Activated B cell treated with CpG ODN at 0.5 μM for 24 hours (primary cell): ENCODE measurements at regions of chr4 and their contacts with region 1.

Region 1: GRCh38 chr4:39181905-39182638 is at the start of gene WDR19:
- DNase-seq: peak; percentile 93
- ATAC-seq: peak; percentile 97
- H3K4me3 Mint-ChIP-seq: no peak within 1 kb of the TSS
- H3K27ac Mint-ChIP-seq: peak within 1 kb of the TSS; percentile 46
- H3K4me1 Mint-ChIP-seq: peaks cover 7% of the 10 kb centered on the region
- H3K27me3 Mint-ChIP-seq: no peaks in the 10 kb centered on the region
- CTCF ChIP-seq: no peak
- total RNA-seq, gene WDR19: 23.8 and 28.4 TPM in 2 replicates

Region 2: GRCh38 chr4:37826295-37827029 is 1355.6 kb before region 1 on chr4 and contains the start of gene PGM2:
- CTCF ChIA-PET with region 1: no interaction called
- POLR2A ChIA-PET with region 1: no interaction called
- intact Hi-C with region 1: loop called (anchors 5 kb)
- DNase-seq: peak; percentile 91
- ATAC-seq: peak; percentile 96
- H3K4me3 Mint-ChIP-seq: peak within 1 kb of the TSS; percentile 100
- H3K27ac Mint-ChIP-seq: peak within 1 kb of the TSS; percentile 98
- H3K4me1 Mint-ChIP-seq: peaks cover 27% of the 10 kb centered on the region
- H3K27me3 Mint-ChIP-seq: no peaks in the 10 kb centered on the region
- CTCF ChIP-seq: no peak
- total RNA-seq, gene PGM2: 26.4 and 29.6 TPM in 2 replicates

Region 3: GRCh38 chr4:39032218-39033085 is 149.6 kb before region 1 on chr4 and contains the start of gene TMEM156:
- CTCF ChIA-PET with region 1: no interaction called
- POLR2A ChIA-PET with region 1: interaction called, 4 read pairs
- intact Hi-C with region 1: loop called (anchors 1 kb)
- DNase-seq: no peak
- ATAC-seq: peak; percentile 69
- H3K4me3 Mint-ChIP-seq: peak within 1 kb of the TSS; percentile 83
- H3K27ac Mint-ChIP-seq: peak within 1 kb of the TSS; percentile 93
- H3K4me1 Mint-ChIP-seq: peaks cover 64% of the 10 kb centered on the region
- H3K27me3 Mint-ChIP-seq: no peaks in the 10 kb centered on the region
- CTCF ChIP-seq: no peak
- total RNA-seq, gene TMEM156: 26.0 and 29.5 TPM in 2 replicates

Region 4: GRCh38 chr4:39169426-39170185 is 12.5 kb before region 1 on chr4:
- CTCF ChIA-PET with region 1: interaction called, 8 read pairs
- POLR2A ChIA-PET with region 1: interaction called, 20 read pairs
- intact Hi-C with region 1: loop called (anchors 1 kb)
- DNase-seq: no peak
- ATAC-seq: no peak
- H3K4me3 Mint-ChIP-seq: no peak overlapping the region
- H3K27ac Mint-ChIP-seq: no peak overlapping the region
- H3K4me1 Mint-ChIP-seq: peaks cover 51% of the 10 kb centered on the region
- H3K27me3 Mint-ChIP-seq: no peaks in the 10 kb centered on the region
- CTCF ChIP-seq: no peak

Region 5: DNA sequence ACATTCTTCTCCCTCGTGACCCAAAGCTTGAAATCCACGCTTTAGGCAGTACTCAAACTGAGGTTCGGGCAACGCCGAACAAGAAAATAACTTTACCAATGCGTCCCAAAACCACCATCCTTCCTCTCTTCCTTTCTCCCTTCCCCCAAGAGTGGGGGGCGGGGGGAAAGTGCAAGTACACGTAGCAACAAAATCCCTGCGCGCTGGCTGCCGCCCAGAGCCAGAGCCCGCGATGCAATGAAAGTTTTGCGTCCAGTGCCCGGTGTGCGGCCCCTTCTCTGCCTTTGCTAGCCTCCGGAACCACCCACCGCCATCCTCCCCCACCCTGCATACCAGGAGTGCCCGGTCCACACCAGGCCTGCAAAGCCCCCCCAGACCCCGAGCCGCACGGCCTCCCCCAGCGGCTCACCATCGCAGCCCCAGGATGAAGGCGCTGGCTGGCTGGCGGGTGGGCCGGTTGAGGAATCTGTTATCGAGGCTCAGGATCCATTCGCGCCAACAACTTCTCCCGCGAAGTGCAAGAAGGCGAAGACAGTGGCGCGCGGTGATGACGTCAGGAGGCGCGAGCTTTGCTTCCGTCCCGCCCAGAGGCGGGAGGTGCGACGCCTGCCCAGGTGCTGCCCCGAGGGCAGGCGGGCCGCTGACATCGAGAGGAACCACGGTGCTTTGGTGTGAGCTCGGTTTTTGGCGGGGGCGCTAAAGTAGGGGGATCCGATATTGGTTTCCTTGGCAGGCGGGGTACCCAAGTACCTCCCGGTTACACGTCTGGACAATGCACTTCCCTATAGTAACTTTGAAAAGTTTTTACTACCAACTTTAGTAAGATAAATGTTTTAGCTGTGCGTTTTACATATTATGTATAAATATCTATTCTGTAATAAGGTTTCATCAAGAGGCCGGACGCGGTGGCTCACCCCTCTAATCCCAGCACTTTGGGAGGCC is 184.0 kb after region 1 on chr4 and contains the start of gene RFC1:
- CTCF ChIA-PET with region 1: no interaction called
- POLR2A ChIA-PET with region 1: no interaction called
- intact Hi-C with region 1: loop called (anchors 5 kb)
- DNase-seq: peak; percentile 92
- ATAC-seq: peak; percentile 94
- H3K4me3 Mint-ChIP-seq: peak within 1 kb of the TSS; percentile 91
- H3K27ac Mint-ChIP-seq: peak within 1 kb of the TSS; percentile 88
- H3K4me1 Mint-ChIP-seq: peaks cover 39% of the 10 kb centered on the region
- H3K27me3 Mint-ChIP-seq: no peaks in the 10 kb centered on the region
- CTCF ChIP-seq: no peak
- total RNA-seq, gene RFC1: 44.8 and 45.9 TPM in 2 replicates

Region 6: GRCh38 chr4:39458505-39459300 is 276.6 kb after region 1 on chr4 and contains the starts of genes LIAS and RPL9:
- CTCF ChIA-PET with region 1: no interaction called
- POLR2A ChIA-PET with region 1: interaction called, 8 read pairs
- intact Hi-C with region 1: loop called (anchors 2 kb)
- DNase-seq: peak; percentile 90
- ATAC-seq: peak; percentile 81
- H3K4me3 Mint-ChIP-seq: peak within 1 kb of the TSS; percentile 97
- H3K27ac Mint-ChIP-seq: peak within 1 kb of the TSS; percentile 98
- H3K4me1 Mint-ChIP-seq: peaks cover 36% of the 10 kb centered on the region
- H3K27me3 Mint-ChIP-seq: no peaks in the 10 kb centered on the region
- CTCF ChIP-seq: no peak
- total RNA-seq, gene LIAS: 19.5 and 20.5 TPM in 2 replicates
- total RNA-seq, gene RPL9: 2,632 and 2,865 TPM in 2 replicates